OCI-LY7 (cell line): ENCODE measurements at regions of chr7 and their contacts with region 1.

Region 1: GRCh38 chr7:112414855-112415490 is 35.3 kb upstream of the IFRD1 start:
- DNase-seq: peak; percentile 51
- H3K4me3 ChIP-seq: no peak overlapping the region
- H3K27ac ChIP-seq: no peak overlapping the region
- H3K4me1 ChIP-seq: peaks cover 4% of the 10 kb centered on the region
- CTCF ChIP-seq: peak; percentile 83

Region 2: DNA sequence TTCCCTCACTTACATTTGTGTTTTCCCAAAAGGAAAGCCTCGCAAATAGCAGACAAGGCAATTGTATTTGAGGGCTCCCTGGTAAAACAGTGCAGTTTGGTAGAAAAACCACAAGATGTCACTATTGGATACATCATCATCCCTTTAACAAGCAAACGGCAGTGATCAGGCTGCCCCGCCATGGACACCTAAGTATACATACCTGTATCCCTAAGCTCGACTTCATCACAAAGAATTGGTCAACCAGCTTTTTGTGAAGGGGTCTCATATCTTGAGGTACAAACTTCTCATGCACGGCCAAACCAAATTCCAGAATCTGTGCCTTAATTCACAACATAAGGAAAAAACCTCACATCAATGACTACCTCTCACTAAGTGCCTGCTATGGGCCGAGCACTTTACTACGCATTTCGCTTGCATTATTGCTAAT is 673.1 kb before region 1 on chr7:
- CTCF ChIA-PET with region 1: no interaction called
- POLR2A ChIA-PET with region 1: no interaction called
- intact Hi-C with region 1: loop called (anchors 5 kb)
- DNase-seq: peak; percentile 63
- H3K4me3 ChIP-seq: no peak overlapping the region
- H3K27ac ChIP-seq: no peak overlapping the region
- H3K4me1 ChIP-seq: no peaks in the 10 kb centered on the region
- CTCF ChIP-seq: peak; percentile 79

Region 3: GRCh38 chr7:112069879-112070321 is 345.1 kb before region 1 on chr7:
- CTCF ChIA-PET with region 1: no interaction called
- POLR2A ChIA-PET with region 1: no interaction called
- intact Hi-C with region 1: loop called (anchors 5 kb)
- DNase-seq: no peak
- H3K4me3 ChIP-seq: no peak overlapping the region
- H3K27ac ChIP-seq: no peak overlapping the region
- H3K4me1 ChIP-seq: no peaks in the 10 kb centered on the region
- CTCF ChIP-seq: no peak